Motor neuron (in vitro differentiated cells): ENCODE measurements at regions of chr2 and their contacts with region 1.

Region 1: GRCh38 chr2:111091811-111092211 is 28.9 kb upstream of the BCL2L11 start:
- ATAC-seq: no peak
- H3K4me3 ChIP-seq: no peak overlapping the region
- H3K27ac ChIP-seq: no peak overlapping the region
- H3K4me1 ChIP-seq: no peaks in the 10 kb centered on the region

Region 2: GRCh38 chr2:110973262-110973661 is 118.5 kb before region 1 on chr2:
- in situ Hi-C with region 1: loop called in 1 of 9 experiments (anchors 25 kb)
- ATAC-seq: no peak
- H3K4me3 ChIP-seq: no peak overlapping the region
- H3K27ac ChIP-seq: no peak overlapping the region
- H3K4me1 ChIP-seq: no peaks in the 10 kb centered on the region

Region 3: DNA sequence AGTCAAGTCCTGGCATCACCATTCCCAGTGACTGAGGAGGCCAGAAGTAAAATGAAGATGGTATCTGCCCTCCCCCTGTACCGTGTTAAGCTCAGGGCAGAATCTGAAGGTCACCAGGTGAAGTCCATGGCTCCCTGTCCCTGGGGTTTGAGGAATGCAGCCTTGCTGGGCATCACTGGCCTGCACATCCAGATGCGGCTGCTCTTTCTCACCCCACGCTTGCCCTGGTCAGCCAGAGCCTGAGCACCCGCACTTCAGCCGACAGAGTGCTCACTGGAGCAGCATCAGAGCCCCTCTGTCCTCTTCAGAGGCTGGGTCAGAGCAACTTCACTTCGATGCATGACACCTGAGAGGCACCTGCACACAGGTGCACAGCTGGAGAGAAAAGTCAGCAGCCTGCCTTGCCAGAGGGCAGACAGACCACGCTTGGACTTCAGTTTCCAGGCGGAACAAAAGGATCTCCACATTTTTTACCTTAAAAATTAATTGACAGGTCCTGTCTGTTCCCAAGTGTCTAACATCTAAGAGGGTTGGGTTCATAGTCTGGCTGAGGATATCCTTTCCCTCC is 524.9 kb after region 1 on chr2:
- in situ Hi-C with region 1: no loop called
- ATAC-seq: no peak
- H3K4me3 ChIP-seq: no peak overlapping the region
- H3K27ac ChIP-seq: no peak overlapping the region
- H3K4me1 ChIP-seq: no peaks in the 10 kb centered on the region